Activated CD8-positive, alpha-beta T cell treated with anti-CD3 and anti-CD28 coated beads, Interleukin-2, amount 10 ng/mL, durations not matched to agents 7 days and 5 days (primary cell): ENCODE measurements at regions of chr2 and their contacts with region 1.

Region 1: GRCh38 chr2:176454893-176455811 is 185.9 kb downstream of the MTX2 start:
- DNase-seq: peak; percentile 87
- ATAC-seq: peak; percentile 65
- H3K4me3 Mint-ChIP-seq: no peak overlapping the region
- H3K27ac Mint-ChIP-seq: no peak overlapping the region
- H3K4me1 Mint-ChIP-seq: no peaks in the 10 kb centered on the region
- H3K27me3 Mint-ChIP-seq: peaks cover 14% of the 10 kb centered on the region

Region 2: GRCh38 chr2:176126929-176127773 is 328.0 kb before region 1 on chr2:
- CTCF ChIA-PET with region 1: interaction called, 50 read pairs
- POLR2A ChIA-PET with region 1: interaction called, 6 read pairs
- DNase-seq: peak; percentile 75
- ATAC-seq: no peak
- H3K4me3 Mint-ChIP-seq: no peak overlapping the region
- H3K27ac Mint-ChIP-seq: no peak overlapping the region
- H3K4me1 Mint-ChIP-seq: peaks cover 16% of the 10 kb centered on the region
- H3K27me3 Mint-ChIP-seq: peaks cover 73% of the 10 kb centered on the region

Region 3: DNA sequence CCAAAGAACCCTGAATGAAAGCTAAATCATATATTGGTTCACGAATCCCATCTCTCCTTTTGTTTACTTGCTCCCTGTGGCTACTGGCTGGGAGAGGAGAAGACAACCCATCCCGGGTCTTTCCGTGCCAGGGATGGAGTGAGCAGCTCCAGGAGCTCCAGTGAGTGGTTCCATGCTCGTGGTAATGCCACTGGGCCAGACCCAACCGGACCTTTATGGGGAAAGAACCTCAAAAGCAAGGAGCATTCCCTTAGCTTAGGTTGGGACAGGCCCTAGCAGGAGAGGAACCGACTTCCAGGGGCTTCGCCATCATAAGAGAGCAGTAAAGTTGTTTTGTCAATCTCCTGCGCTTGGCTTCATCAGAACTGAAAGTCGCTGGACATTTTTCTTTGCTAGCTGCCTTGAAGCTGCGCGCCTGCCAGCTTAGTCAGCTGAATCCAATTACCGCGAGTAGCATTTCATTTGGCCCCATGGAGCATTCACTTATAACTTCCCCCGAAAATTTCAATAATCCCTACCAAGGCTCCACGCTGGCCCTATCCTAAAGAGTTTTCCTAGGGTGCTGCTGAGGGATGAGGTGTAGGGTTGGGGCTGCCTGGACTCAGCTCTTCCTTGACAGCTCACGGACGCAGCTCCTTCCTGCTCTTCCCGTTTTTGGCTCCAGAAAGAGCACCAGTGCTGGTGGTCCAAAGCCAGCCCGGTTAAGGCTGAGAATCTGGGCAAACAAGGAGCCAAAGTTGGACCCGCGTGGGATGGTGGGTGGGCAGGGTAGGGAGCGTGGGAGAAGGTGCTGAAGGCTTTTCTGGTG is 293.1 kb before region 1 on chr2:
- CTCF ChIA-PET with region 1: interaction called, 11 read pairs
- POLR2A ChIA-PET with region 1: no interaction called
- DNase-seq: no peak
- ATAC-seq: no peak
- H3K4me3 Mint-ChIP-seq: no peak overlapping the region
- H3K27ac Mint-ChIP-seq: no peak overlapping the region
- H3K4me1 Mint-ChIP-seq: peaks cover 13% of the 10 kb centered on the region
- H3K27me3 Mint-ChIP-seq: peaks cover 86% of the 10 kb centered on the region

Region 4: GRCh38 chr2:176356251-176356650 is 98.9 kb before region 1 on chr2:
- CTCF ChIA-PET with region 1: no interaction called
- POLR2A ChIA-PET with region 1: no interaction called
- DNase-seq: no peak
- ATAC-seq: no peak
- H3K4me3 Mint-ChIP-seq: peak overlapping the region; percentile 8
- H3K27ac Mint-ChIP-seq: no peak overlapping the region
- H3K4me1 Mint-ChIP-seq: peaks cover 3% of the 10 kb centered on the region
- H3K27me3 Mint-ChIP-seq: peaks cover 6% of the 10 kb centered on the region

Region 5: GRCh38 chr2:176432434-176432833 is 22.7 kb before region 1 on chr2:
- CTCF ChIA-PET with region 1: interaction called, 13 read pairs
- POLR2A ChIA-PET with region 1: no interaction called
- DNase-seq: no peak
- ATAC-seq: no peak
- H3K4me3 Mint-ChIP-seq: no peak overlapping the region
- H3K27ac Mint-ChIP-seq: no peak overlapping the region
- H3K4me1 Mint-ChIP-seq: peaks cover 7% of the 10 kb centered on the region
- H3K27me3 Mint-ChIP-seq: peaks cover 8% of the 10 kb centered on the region

Region 6: DNA sequence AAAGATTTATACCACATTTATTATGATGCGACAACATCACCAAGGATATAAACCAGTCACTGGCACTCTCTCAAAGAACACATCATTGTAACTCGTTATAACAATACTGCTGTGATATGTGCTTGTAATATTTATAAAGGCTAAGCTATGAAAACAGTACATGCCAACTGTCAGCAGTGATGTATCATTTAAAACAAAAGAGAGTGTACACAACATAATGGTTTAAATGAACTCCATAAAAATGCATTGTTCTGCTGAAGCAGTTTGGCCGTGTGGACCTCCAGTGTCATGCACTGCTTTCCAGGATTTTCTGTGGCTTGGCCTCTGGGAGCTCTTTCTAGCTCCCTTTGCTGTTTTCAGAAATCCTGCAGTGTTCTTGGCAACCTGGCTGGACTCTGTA is 29.7 kb after region 1 on chr2:
- CTCF ChIA-PET with region 1: interaction called, 10 read pairs
- POLR2A ChIA-PET with region 1: no interaction called
- DNase-seq: no peak
- ATAC-seq: no peak
- H3K4me3 Mint-ChIP-seq: no peak overlapping the region
- H3K27ac Mint-ChIP-seq: no peak overlapping the region
- H3K4me1 Mint-ChIP-seq: no peaks in the 10 kb centered on the region
- H3K27me3 Mint-ChIP-seq: peaks cover 31% of the 10 kb centered on the region

Region 7: DNA sequence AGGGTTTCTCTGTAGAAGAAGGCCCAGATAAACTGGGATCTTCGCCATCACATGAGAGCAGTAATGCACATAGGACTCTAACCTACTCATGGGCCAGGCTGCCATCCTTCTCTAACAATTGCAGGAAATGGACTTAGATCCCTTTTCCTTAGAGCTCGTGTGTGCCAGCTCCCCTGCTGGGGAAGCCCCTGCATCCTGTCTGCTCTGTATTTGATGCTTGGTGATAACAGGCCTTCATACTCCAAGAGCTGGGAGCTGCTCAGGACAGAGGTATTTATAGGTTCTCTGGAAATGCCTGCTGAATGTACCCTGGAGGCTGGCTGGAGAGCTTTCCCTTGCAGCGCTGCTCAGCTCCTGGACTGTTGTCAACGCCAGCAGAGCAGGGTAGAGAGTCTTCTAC is 63.7 kb after region 1 on chr2:
- CTCF ChIA-PET with region 1: no interaction called
- POLR2A ChIA-PET with region 1: no interaction called
- DNase-seq: no peak
- ATAC-seq: no peak
- H3K4me3 Mint-ChIP-seq: no peak overlapping the region
- H3K27ac Mint-ChIP-seq: no peak overlapping the region
- H3K4me1 Mint-ChIP-seq: peaks cover 16% of the 10 kb centered on the region
- H3K27me3 Mint-ChIP-seq: peaks cover 7% of the 10 kb centered on the region